A673 (cell line): ENCODE measurements at regions of chr12 and their contacts with region 1.

Region 1: DNA sequence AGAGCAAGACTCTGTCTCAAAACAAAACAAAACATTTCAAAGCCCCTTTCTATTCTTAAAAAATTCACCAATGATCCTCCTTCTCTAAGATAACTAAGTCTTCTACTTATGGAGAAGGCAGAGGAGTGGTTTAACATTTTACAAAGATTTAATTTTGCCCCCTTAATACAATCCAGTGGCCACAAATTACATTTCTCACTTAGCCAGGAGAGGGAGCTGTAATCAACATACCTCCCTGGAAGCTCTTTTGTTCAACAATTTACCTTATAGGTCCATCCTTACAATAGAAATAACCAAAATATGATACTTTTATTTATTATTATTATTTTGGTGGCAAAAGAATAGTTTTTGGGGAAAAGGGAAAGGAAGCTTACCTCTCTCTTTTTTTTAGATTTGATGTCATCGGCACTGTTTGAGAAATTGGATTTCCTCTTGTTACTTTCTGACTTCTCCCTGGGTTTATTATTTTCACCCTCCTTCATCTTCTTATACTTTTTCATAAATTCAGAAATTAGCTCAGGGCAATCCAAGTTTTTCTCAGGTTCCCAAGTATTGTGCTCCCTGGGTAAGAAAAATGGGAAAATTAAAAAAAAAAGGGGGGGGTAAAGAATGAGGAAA is 28.1 kb downstream of the CBX5 start:
- DNase-seq: peak; percentile 71
- H3K4me3 ChIP-seq: no peak overlapping the region
- H3K27ac ChIP-seq: no peak overlapping the region
- H3K4me1 ChIP-seq: peaks cover 11% of the 10 kb centered on the region
- H3K27me3 ChIP-seq: no peaks in the 10 kb centered on the region
- CTCF ChIP-seq: peak; percentile 75

Region 2: DNA sequence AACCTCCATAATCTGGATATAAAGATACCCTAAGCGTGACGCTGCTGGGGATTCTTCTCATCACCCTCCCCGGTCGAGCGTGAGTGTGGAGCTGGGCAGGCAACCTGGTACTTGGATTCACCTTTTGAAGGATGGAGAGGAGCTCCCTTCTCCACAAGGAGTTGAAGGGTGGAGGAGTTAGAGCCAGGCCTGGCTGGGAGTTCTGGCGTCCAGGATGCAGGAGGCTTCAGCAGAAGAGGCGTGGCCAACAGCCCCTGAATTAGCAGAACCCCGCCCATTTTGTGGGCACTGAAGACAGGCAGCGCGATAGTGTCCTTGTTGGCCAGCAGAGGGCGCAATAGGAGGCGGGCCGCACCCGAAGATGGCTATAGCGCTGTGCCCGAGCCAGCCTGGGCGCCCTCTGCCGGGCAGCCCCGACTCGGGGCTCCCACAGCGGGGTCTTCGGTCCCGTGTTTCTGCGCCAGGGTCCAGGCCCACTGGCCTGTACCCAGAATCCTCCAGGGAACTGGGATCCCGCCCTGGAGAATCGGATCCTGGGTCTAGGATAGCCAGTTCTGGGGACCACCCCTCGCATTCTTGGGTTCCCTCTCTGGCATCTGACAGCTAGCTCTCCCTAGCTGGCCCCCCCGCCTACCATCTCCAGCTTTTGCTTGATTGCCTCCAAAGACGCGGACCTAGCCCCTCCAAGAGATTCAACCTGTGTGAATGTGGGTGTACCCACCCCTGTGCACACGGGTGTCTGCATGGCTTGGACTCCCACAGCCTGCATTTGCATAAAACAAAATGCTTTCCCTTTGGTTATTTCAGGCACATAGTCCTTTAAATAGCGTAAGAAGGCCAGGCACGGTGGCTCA is 37.0 kb before region 1 on chr12:
- CTCF ChIA-PET with region 1: interaction called, 13 read pairs
- POLR2A ChIA-PET with region 1: no interaction called
- intact Hi-C with region 1: no loop called
- DNase-seq: peak; percentile 96
- H3K4me3 ChIP-seq: peak overlapping the region; percentile 31
- H3K27ac ChIP-seq: no peak overlapping the region
- H3K4me1 ChIP-seq: peaks cover 19% of the 10 kb centered on the region
- H3K27me3 ChIP-seq: no peaks in the 10 kb centered on the region
- CTCF ChIP-seq: peak; percentile 100

Region 3: DNA sequence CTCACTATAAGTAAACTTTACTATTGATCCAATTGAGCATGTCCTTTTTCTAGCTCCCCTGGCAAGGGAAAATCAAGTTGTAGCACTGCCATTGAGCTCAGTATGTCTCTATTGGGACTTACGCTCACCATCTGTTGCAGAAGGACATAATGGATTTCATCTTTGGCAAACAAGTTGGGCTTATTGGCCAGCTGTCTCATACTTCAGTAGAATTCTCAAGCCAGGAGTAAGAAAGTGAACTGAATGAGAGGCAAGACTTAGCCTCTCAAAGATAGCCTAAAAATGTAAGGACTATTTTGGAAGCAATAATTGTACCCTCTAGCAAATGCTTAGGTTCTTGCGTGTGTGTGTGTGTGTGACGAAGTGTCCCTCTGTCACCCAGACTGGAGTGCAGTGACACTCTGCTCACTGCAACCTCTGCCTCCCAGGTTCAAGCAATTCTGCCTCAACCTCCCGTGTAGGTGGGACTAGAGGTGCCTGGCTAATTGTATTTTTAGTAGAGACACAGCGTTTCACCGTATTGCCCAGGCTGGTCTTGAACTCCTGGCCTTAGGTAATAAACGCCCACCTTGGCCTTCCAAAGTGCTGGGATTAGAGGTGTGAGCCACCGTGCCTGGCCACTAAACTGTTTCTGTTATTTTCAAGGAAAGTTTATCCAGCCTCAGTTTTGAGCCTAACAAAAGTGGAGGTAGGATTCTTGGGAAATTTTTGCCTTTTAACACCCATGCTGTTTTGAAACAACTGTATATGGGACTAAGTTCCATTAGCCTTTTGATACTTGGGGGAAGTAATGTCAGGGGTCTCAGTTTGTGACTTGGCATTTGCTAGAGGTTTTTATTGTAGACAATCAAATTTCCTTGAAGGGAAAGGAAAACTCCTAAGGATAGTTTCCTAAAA is 35.7 kb after region 1 on chr12:
- CTCF ChIA-PET with region 1: interaction called, 3 read pairs
- POLR2A ChIA-PET with region 1: interaction called, 15 read pairs
- intact Hi-C with region 1: no loop called
- DNase-seq: no peak
- H3K4me3 ChIP-seq: no peak overlapping the region
- H3K27ac ChIP-seq: peak overlapping the region; percentile 32
- H3K4me1 ChIP-seq: peaks cover 8% of the 10 kb centered on the region
- H3K27me3 ChIP-seq: no peaks in the 10 kb centered on the region
- CTCF ChIP-seq: no peak

Region 4: GRCh38 chr12:54294152-54294952 is 42.6 kb after region 1 on chr12:
- CTCF ChIA-PET with region 1: interaction called, 12 read pairs
- POLR2A ChIA-PET with region 1: no interaction called
- intact Hi-C with region 1: no loop called
- DNase-seq: no peak
- H3K4me3 ChIP-seq: no peak overlapping the region
- H3K27ac ChIP-seq: no peak overlapping the region
- H3K4me1 ChIP-seq: no peaks in the 10 kb centered on the region
- H3K27me3 ChIP-seq: peaks cover under 1% of the 10 kb centered on the region
- CTCF ChIP-seq: peak; percentile 85